Body of pancreas (tissue), 4 donors: ENCODE measurements at regions of chr1 and their contacts with region 1.

Region 1: GRCh38 chr1:53754484-53755312 is 15.7 kb upstream of the GLIS1 start:
- DNase-seq: peak; percentile 29 to 52 (median 38)
- ATAC-seq: no peak
- H3K4me3 ChIP-seq: no peak overlapping the region
- H3K27ac ChIP-seq: no peak overlapping the region
- H3K4me1 ChIP-seq: no peaks in the 10 kb centered on the region
- H3K27me3 ChIP-seq: no peaks in the 10 kb centered on the region
- CTCF ChIP-seq: peak; percentile 43 to 64 (median 50)
- POLR2A ChIP-seq: no peak

Region 2: GRCh38 chr1:53482466-53483181 is 272.1 kb before region 1 on chr1:
- intact Hi-C with region 1: loop called (anchors 5 kb)
- DNase-seq: no peak
- ATAC-seq: no peak
- H3K4me3 ChIP-seq: no peak overlapping the region
- H3K27ac ChIP-seq: no peak overlapping the region
- H3K4me1 ChIP-seq: peaks cover 3% of the 10 kb centered on the region
- H3K27me3 ChIP-seq: peaks cover 0 to 13% of the 10 kb centered on the region in 2 donors
- CTCF ChIP-seq: no peak
- POLR2A ChIP-seq: no peak

Region 3: GRCh38 chr1:53738205-53739108 is 16.2 kb before region 1 on chr1:
- intact Hi-C with region 1: no loop called
- DNase-seq: peak in 2 of 4 donors; percentile 6 to 18
- ATAC-seq: peak; percentile 12
- H3K4me3 ChIP-seq: peak overlapping the region in 1 of 2 donors; percentile 31
- H3K27ac ChIP-seq: no peak overlapping the region
- H3K4me1 ChIP-seq: peaks cover 22% of the 10 kb centered on the region
- H3K27me3 ChIP-seq: peaks cover 3 to 14% of the 10 kb centered on the region in 2 donors
- CTCF ChIP-seq: no peak
- POLR2A ChIP-seq: no peak